Posterior vena cava (tissue), 2 donors: ENCODE measurements at regions of chr7 and their contacts with region 1.

Region 1: DNA sequence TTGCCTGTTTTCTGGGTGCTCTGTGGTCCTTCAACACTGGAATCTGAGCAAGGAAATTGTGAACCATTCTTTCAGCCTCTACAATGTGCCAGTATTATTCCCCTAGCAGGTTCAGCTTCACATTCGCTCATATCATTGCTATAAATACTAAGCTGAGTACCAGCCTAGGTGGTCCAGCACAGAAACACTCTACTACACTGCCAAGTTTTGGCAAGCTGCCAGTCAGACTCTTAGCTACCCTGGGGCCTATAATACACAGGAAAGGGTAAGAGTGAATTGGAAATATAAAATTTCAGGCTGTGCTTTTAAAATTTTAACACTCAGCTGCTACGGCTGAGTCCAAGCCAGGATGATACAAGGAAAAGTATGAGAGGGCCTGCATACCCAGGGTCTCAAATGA is 49.9 kb upstream of the PPP1R3A start:
- DNase-seq: no peak

Region 2: GRCh38 chr7:114141415-114141814 is 172.7 kb after region 1 on chr7:
- intact Hi-C with region 1: loop called in 1 of 2 experiments (anchors 5 kb)
- DNase-seq: no peak

Region 3: DNA sequence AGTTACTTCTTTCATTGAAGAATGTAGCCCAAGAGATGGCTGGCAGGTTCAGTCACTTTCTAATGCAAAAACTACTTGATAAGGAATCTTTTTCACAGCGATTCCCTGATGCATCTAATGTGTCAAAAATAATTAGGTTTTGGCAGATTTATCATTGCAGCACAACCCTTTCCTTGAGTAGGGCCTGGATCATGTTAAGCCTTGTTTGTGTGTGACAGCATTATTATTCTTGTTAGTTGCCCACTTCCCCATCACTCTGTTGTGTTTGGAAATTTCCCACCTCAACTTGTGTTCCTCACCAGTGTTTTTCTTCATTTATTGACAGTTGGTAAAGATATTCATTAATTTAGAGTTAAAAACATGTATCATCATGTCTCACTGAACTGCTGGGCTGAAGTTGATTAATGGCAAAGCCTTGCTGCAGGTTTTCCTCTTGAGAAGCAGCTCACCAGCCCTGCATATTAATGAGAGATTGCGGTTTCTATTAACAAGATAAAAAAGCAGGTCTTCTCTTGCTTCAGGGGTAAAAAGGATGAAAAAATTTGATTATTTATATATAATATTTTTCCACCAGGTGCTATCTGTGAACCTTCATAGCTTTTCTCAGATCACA is 719.8 kb after region 1 on chr7:
- intact Hi-C with region 1: loop called in 1 of 2 experiments (anchors 5 kb)
- DNase-seq: no peak